ENCODE measurements at regions of chr4 and their contacts with region 1.

Region 1: DNA sequence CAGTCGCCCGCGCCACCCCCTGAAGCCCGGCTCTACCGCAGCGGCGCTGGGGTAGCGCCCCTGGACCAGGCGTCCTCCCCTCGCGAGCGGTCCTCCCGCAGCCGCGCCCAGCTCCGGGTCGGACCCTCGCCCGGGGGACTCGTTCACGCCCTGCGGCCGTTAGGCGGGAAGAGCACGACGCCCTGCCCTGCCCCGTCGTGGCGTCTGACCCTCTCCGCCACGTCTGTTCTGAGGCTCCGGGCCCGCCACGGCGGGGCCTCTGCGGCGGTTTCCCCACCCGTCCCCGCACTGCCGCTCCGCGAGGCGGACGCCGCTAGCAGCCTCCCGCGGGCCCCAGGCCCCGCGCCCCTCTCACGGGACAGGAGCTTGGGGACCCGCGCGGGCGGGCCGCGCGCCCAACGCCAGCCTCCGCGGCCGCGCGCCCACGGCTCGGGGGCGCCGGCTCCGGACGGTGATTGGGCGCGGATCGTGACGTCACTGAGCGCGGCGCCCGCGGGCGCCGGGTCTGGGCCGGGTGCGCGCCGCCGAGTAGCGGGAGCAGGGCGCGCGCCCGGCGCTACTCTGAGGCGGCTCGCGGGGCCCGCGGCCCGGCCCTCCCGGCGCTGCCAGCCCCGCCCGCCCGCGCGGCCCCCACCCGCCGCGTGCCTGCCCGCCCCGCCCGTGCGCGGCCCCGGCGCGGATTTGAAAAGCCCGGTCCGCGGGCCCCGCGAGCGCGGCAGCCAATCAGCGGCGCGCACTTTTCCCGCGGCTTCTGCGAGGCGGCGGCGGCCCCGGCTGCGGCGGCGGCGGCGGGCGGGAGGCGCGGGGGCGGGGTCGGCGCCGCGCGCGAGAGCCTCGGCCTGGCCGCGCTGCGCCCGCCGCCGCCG is at the start of gene NSD2:
- DNase-seq: peak; percentile 64 to 91 (median 81)
- H3K4me3 ChIP-seq: peak within 1 kb of the TSS; percentile 61 to 93 (median 80)
- H3K27ac ChIP-seq: peak within 1 kb of the TSS; percentile 6 to 98 (median 94)
- H3K27me3 ChIP-seq: peaks cover 0 to 3% (median 0%) of the 10 kb centered on the region in 45 donors
- CTCF ChIP-seq: peak in 2 of 56 donors; percentile 11 to 20
- total RNA-seq, gene NSD2: 78.8 to 144 (median 108) TPM

Region 2: DNA sequence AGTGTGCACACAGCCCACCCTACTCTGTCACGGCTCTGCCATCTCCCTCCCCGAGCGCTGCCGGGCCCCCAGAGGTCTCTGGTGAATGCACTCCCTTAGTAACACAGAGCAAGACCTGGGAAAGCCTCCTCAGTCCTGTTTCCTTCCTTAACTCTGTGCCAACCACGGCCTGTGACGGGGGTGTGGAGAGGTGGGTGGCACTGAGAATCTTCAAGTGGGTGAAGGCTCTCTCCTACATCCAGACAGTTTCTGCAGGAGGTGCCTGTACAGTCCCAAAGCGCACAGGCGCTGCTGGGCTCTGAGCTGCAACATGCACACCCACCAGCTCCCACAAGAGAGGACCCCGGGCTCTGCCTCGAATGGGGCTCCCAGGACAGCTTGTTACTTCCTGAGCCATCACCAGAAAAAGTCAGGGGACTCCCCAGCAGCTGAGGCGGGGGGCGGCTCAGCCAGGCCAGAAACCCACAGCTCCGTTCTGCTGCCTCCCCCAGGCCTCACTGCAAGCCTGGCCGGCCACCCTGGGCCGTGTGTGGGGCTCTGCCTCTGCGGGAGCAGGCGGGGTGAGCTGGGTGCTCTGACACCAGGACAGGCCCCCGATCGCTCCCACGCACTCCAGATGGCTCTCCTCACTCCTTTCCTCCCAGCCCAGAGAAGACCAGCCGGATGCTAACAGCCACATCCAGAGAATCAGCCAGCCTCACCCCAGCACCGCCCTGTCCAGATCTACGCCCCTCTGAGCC is 216.4 kb before region 1 on chr4:
- intact Hi-C with region 1: no loop called
- DNase-seq: no peak
- H3K4me3 ChIP-seq: no peak overlapping the region
- H3K27ac ChIP-seq: no peak overlapping the region
- H3K27me3 ChIP-seq: no peaks in the 10 kb centered on the region
- CTCF ChIP-seq: no peak

Region 3: GRCh38 chr4:1712216-1713002 is 158.4 kb before region 1 on chr4 and contains the start of gene SLBP:
- intact Hi-C with region 1: loop called in 1 of 2 experiments (anchors 5 kb)
- DNase-seq: peak; percentile 81 to 92 (median 87)
- H3K4me3 ChIP-seq: peak within 1 kb of the TSS; percentile 68 to 95 (median 87)
- H3K27ac ChIP-seq: peak within 1 kb of the TSS; percentile 91 to 100 (median 98)
- H3K27me3 ChIP-seq: no peaks in the 10 kb centered on the region
- CTCF ChIP-seq: peak in 14 of 56 donors; percentile 5 to 40 (median 24)
- total RNA-seq, gene SLBP: 23.0 to 54.6 (median 39.9) TPM

Region 4: GRCh38 chr4:1856042-1856788 is 14.6 kb before region 1 on chr4 and contains the start of gene LETM1:
- intact Hi-C with region 1: loop called (anchors 1 to 2 kb)
- DNase-seq: peak; percentile 91 to 98 (median 96)
- H3K4me3 ChIP-seq: peak within 1 kb of the TSS; percentile 53 to 99 (median 93)
- H3K27ac ChIP-seq: peak within 1 kb of the TSS; percentile 14 to 96 (median 83)
- H3K27me3 ChIP-seq: no peaks in the 10 kb centered on the region
- CTCF ChIP-seq: peak in 41 of 56 donors; percentile 6 to 62 (median 33)
- total RNA-seq, gene LETM1: 36.9 to 61.2 (median 48.6) TPM